GM12878 (cell line): ENCODE measurements at regions of chr12 and their contacts with region 1.

Region 1: GRCh38 chr12:42237052-42237852 is 796 bp downstream of the YAF2 start:
- DNase-seq: peak; percentile 41
- ATAC-seq: peak; percentile 83
- H3K4me3 ChIP-seq: peak overlapping the region; percentile 73
- H3K27ac ChIP-seq: peak overlapping the region; percentile 87
- H3K4me1 ChIP-seq: peaks cover 3% of the 10 kb centered on the region; the same call in 1 of the 2 replicates
- H3K27me3 ChIP-seq: no peaks in the 10 kb centered on the region
- CTCF ChIP-seq: peak; percentile 48 to 63 (median 53)
- EP300 ChIP-seq: no peak
- POLR2A ChIP-seq: peak; percentile 91
- RAD21 ChIP-seq: peak; percentile 30

Region 2: DNA sequence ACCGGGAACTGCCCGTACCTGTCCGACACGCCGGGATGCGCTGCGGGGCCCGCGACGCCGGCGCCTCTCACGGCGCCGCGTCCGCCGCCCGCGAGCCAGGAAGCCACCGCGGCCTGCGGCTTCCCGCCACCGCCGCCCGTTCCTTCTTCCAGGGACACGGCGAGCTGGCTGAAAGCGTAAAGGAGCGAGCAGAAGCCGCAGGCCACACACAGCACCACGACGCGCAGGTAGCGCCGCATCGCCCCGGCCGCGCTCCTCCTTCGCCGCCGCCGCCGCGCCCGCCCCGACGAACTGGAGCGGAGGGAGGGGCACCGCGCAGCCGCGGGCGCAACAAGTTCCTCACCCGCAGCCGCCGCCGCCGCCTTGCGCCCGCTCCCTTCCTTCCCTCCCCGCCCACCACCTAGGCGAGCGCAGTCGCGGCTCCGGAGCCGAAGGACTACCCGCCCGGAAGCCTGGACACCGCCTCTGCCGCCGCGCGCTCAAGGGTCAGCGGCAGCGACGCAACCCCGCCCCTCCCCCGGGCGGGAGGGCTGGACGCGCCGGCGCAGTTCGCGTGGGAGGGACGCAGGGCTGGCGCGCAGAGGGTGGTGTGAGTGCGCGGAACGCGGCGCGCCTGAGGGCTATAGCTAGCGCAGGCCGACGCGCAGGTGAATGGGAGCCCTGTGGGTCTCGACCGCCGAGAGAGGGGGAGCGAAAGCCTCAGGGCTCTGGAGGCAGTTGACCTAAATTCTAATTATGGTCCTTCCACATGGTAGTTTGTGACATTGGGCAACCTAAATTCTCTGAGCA is 92.7 kb before region 1 on chr12 and contains the start of gene GXYLT1:
- CTCF ChIA-PET with region 1: interaction called, 4 read pairs
- POLR2A ChIA-PET with region 1: interaction called, 6 read pairs
- RAD21 ChIA-PET with region 1: interaction called, 6 read pairs
- SMC1A ChIA-PET with region 1: interaction called, 3 read pairs
- in situ Hi-C with region 1: no loop called
- intact Hi-C with region 1: loop called (anchors 5 kb)
- DNase-seq: peak; percentile 79
- ATAC-seq: peak; percentile 94
- H3K4me3 ChIP-seq: peak within 1 kb of the TSS; percentile 82
- H3K27ac ChIP-seq: peak within 1 kb of the TSS; percentile 61
- H3K4me1 ChIP-seq: peaks cover 5% of the 10 kb centered on the region; the same call in 1 of the 2 replicates
- H3K27me3 ChIP-seq: no peaks in the 10 kb centered on the region
- CTCF ChIP-seq: no peak
- EP300 ChIP-seq: no peak; a peak in 1 of 4 replicates
- POLR2A ChIP-seq: peak; percentile 86
- RAD21 ChIP-seq: no peak
- polyA plus RNA-seq, gene GXYLT1: 2.3 to 2.4 TPM

Region 3: DNA sequence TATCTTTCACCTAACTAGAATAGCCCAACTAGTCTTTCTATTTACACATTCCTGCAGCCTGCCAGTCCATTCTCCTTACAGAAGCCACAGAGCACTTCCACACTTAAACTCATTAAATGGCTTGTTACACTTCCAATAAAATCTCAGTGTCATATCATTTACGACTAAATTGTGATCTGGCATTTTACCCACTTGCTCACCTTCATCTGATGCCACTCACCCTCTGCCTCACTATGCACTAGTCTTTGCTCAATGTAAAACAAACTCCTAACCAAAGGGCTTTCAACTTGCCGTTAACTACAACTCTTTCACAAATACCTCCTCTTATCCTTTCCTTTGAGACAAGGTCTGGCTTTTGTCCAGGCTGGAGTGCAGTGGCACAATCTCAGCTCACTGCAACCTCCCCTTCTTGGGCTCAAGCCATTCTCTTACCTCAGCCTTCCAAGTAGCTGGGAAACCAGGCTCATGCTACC is 23.3 kb before region 1 on chr12:
- CTCF ChIA-PET with region 1: interaction called, 5 read pairs
- POLR2A ChIA-PET with region 1: no interaction called
- RAD21 ChIA-PET with region 1: interaction called, 5 read pairs
- SMC1A ChIA-PET with region 1: interaction called, 13 read pairs
- in situ Hi-C with region 1: no loop called
- intact Hi-C with region 1: no loop called
- DNase-seq: no peak
- ATAC-seq: no peak
- H3K4me3 ChIP-seq: no peak overlapping the region
- H3K27ac ChIP-seq: no peak overlapping the region
- H3K4me1 ChIP-seq: no peaks in the 10 kb centered on the region
- H3K27me3 ChIP-seq: no peaks in the 10 kb centered on the region
- CTCF ChIP-seq: no peak
- EP300 ChIP-seq: no peak
- POLR2A ChIP-seq: no peak
- RAD21 ChIP-seq: no peak

Region 4: DNA sequence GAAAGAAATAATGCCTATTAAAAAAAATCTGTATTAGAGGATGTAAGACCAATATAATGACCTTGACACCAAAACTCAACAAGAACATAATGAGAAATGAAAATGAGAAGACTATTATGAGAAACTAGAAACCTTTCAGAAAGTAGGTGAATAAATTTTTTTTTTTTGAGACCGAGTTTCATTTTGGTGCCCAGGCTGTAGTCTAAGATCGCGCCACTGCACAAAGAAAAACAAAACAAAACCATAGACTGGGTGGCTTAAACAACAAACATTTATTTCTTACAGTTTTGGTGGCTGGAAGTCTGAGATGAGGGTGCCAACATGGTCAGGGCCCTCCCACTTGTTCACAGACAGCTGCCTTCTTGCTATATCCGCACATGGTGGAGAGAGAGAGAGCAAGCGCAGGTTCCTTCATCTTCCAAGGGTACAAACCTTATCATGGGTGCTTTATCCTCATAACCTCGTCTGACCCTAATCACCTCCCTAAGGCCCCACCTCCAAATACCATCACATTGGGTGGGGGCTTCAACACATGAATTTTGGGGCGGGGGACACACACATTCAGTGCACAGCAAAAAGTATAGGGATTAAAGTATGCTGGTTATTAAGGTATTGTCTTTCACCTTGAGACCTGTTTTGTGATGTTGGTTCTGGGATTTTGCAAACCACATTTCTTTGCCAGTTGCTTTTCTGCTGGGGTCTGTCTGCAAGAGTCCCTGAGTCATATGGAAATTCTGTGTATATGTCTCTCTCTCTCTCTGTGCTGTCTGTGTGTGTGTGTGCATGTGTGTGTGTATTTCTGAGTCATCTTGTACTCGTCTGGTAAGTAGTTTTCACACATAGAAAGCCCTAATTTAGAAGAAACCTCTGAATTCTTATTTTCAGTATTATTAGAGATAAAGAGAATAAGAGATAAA is 62.4 kb after region 1 on chr12:
- CTCF ChIA-PET with region 1: interaction called, 8 read pairs
- POLR2A ChIA-PET with region 1: interaction called, 3 read pairs
- RAD21 ChIA-PET with region 1: interaction called, 5 read pairs
- SMC1A ChIA-PET with region 1: interaction called, 13 read pairs
- in situ Hi-C with region 1: no loop called
- intact Hi-C with region 1: loop called (anchors 1 kb)
- DNase-seq: peak; percentile 97
- ATAC-seq: peak; percentile 88
- H3K4me3 ChIP-seq: peak overlapping the region; percentile 55; the same call in 1 of the 2 replicates
- H3K27ac ChIP-seq: peak overlapping the region; percentile 77
- H3K4me1 ChIP-seq: peaks cover 20% of the 10 kb centered on the region
- H3K27me3 ChIP-seq: no peaks in the 10 kb centered on the region
- CTCF ChIP-seq: no peak
- EP300 ChIP-seq: peak; percentile 96 to 97
- POLR2A ChIP-seq: no peak
- RAD21 ChIP-seq: peak; percentile 25; the same call in 1 of the 2 replicates

Region 5: GRCh38 chr12:42332301-42333285 is 95.3 kb after region 1 on chr12:
- CTCF ChIA-PET with region 1: interaction called, 12 read pairs
- POLR2A ChIA-PET with region 1: no interaction called
- RAD21 ChIA-PET with region 1: interaction called, 5 read pairs
- SMC1A ChIA-PET with region 1: interaction called, 14 read pairs
- in situ Hi-C with region 1: no loop called
- intact Hi-C with region 1: no loop called
- DNase-seq: no peak
- ATAC-seq: peak; percentile 81
- H3K4me3 ChIP-seq: no peak overlapping the region
- H3K27ac ChIP-seq: no peak overlapping the region
- H3K4me1 ChIP-seq: peaks cover 2% of the 10 kb centered on the region
- H3K27me3 ChIP-seq: no peaks in the 10 kb centered on the region
- CTCF ChIP-seq: peak; percentile 50 to 67 (median 53)
- EP300 ChIP-seq: no peak
- POLR2A ChIP-seq: no peak
- RAD21 ChIP-seq: peak; percentile 88